CD8-positive, alpha-beta T cell (primary cell): ENCODE measurements at regions of chr6 and their contacts with region 1.

Region 1: DNA sequence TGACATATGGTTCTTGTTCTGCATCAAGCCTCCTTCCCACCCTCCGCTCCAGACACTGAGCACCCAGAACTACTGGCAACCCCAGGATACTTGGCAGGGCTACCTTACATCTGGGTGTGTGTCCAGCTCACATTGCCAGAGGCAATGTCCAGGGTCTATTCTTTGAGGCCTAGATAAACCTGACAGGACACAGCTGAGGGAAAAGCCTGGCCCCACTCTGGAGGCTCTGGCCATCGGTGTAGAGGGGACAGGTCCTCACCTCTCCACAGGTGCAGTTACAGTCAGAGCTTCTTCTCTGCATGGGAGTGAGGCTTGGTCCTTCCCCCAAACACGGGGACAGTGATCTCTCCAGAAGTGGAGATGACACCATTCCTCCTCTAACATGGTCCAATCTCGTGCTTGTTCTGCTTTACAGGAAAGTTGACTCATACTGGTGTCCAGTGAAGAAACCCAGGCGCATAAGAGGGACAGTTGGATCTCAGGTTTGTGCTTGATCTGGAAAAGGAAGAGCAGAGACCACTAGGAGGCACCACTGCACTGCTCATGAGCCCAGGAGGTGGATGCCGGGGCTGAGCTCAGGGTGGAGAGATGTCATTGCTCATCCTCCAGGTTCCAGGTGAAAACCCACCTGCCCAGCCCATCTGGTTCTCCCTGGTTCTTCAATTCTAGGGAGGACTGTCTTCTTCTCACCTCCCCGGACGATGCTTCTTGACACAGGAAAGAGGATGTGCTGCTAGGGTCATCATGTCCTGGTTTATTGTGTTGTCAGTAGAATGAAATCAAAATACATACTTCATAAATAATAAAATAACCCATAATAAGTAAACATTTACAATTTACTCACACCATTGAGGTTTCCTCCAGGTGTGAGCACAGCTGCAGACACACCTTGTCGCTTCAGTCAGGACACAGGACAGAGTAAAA is 14.7 kb downstream of the HLA-F start:
- DNase-seq: peak; percentile 45 to 87 (median 75)
- ATAC-seq: peak; percentile 89
- H3K4me3 ChIP-seq: no peak overlapping the region
- H3K4me3 Mint-ChIP-seq: no peak overlapping the region
- H3K27ac ChIP-seq: no peak overlapping the region
- H3K27ac Mint-ChIP-seq: no peak overlapping the region
- H3K4me1 ChIP-seq: no peaks in the 10 kb centered on the region
- H3K4me1 Mint-ChIP-seq: peaks cover 16% of the 10 kb centered on the region
- H3K27me3 ChIP-seq: no peaks in the 10 kb centered on the region
- H3K27me3 Mint-ChIP-seq: no peaks in the 10 kb centered on the region
- CTCF ChIP-seq: peak; percentile 67

Region 2: DNA sequence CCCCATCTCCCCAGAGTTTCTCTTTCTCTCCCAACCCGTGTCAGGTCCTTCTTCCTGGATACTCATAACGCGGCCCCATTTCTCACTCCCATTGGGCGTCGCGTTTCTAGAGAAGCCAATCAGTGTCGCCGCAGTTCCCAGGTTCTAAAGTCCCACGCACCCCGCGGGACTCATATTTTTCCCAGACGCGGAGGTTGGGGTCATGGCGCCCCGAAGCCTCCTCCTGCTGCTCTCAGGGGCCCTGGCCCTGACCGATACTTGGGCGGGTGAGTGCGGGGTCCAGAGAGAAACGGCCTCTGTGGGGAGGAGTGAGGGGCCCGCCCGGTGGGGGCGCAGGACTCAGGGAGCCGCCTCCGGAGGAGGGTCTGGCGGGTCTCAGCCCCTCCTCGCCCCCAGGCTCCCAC is 14.7 kb before region 1 on chr6 and contains the start of gene HLA-F:
- CTCF ChIA-PET with region 1: interaction called, 39 read pairs
- POLR2A ChIA-PET with region 1: interaction called, 8 read pairs
- intact Hi-C with region 1: no loop called
- DNase-seq: peak; percentile 69 to 98 (median 85)
- ATAC-seq: peak; percentile 77
- H3K4me3 ChIP-seq: peak within 1 kb of the TSS; percentile 98
- H3K4me3 Mint-ChIP-seq: peak within 1 kb of the TSS; percentile 93
- H3K27ac ChIP-seq: peak within 1 kb of the TSS; percentile 88 to 100
- H3K27ac Mint-ChIP-seq: peak within 1 kb of the TSS; percentile 97
- H3K4me1 ChIP-seq: peaks cover 48% of the 10 kb centered on the region
- H3K4me1 Mint-ChIP-seq: peaks cover 56% of the 10 kb centered on the region
- H3K27me3 ChIP-seq: no peaks in the 10 kb centered on the region
- H3K27me3 Mint-ChIP-seq: no peaks in the 10 kb centered on the region
- CTCF ChIP-seq: no peak
- total RNA-seq, gene HLA-F: 378 to 382 TPM

Region 3: DNA sequence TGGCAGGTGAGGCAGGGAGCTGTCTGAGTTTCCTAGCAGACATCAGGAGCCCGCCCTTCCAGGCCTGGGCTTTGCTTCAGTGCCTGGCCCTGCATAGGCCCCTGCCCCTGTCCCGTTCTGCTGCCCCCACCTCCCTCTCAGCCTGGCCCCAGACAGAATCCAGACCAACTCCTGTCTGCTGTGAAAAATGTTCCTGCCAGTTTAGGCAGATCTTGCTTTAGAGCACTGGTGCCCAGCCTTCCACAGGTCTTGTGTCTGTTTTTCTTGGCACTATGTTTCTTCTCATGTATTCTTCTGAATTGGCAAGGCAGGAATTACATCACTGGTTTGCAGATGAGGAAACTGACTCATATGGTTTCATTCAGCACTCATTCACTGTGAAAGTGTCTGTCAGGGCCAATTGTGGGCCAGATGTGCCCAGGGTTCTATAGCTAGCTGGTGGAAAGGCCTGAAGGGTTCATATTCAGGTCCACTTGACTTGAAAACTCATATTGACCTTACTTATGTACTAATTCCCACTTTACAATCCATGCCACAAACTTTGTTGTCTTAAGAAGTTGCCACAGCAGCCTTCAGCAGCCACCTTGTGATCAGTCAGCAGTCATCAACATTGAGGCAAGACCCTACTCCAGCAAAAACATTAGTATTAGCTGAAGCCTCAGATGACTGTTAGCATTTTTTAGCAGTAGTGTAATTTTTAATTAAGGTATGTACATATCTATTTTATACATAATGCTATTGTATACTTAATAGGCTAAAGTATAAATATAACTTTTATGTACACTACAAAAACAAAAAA is 25.7 kb after region 1 on chr6:
- CTCF ChIA-PET with region 1: interaction called, 15 read pairs
- POLR2A ChIA-PET with region 1: no interaction called
- intact Hi-C with region 1: no loop called
- DNase-seq: no peak
- ATAC-seq: no peak
- H3K4me3 ChIP-seq: no peak overlapping the region
- H3K4me3 Mint-ChIP-seq: no peak overlapping the region
- H3K27ac ChIP-seq: no peak overlapping the region
- H3K27ac Mint-ChIP-seq: no peak overlapping the region
- H3K4me1 ChIP-seq: no peaks in the 10 kb centered on the region
- H3K4me1 Mint-ChIP-seq: peaks cover 6% of the 10 kb centered on the region
- H3K27me3 ChIP-seq: no peaks in the 10 kb centered on the region
- H3K27me3 Mint-ChIP-seq: peaks cover 18% of the 10 kb centered on the region
- CTCF ChIP-seq: no peak

Region 4: GRCh38 chr6:29834564-29835436 is 96.8 kb after region 1 on chr6:
- CTCF ChIA-PET with region 1: interaction called, 90 read pairs
- POLR2A ChIA-PET with region 1: no interaction called
- intact Hi-C with region 1: loop called in 1 of 2 experiments (anchors 1 kb)
- DNase-seq: peak; percentile 26 to 77 (median 61)
- ATAC-seq: peak; percentile 57
- H3K4me3 ChIP-seq: no peak overlapping the region
- H3K4me3 Mint-ChIP-seq: no peak overlapping the region
- H3K27ac ChIP-seq: no peak overlapping the region
- H3K27ac Mint-ChIP-seq: no peak overlapping the region
- H3K4me1 ChIP-seq: no peaks in the 10 kb centered on the region
- H3K4me1 Mint-ChIP-seq: no peaks in the 10 kb centered on the region
- H3K27me3 ChIP-seq: peaks cover 0 to 8% of the 10 kb centered on the region in 2 experiments
- H3K27me3 Mint-ChIP-seq: peaks cover 68% of the 10 kb centered on the region
- CTCF ChIP-seq: peak; percentile 79

Region 5: GRCh38 chr6:30013291-30013922 is 275.4 kb after region 1 on chr6:
- CTCF ChIA-PET with region 1: interaction called, 4 read pairs
- POLR2A ChIA-PET with region 1: no interaction called
- intact Hi-C with region 1: loop called in 1 of 2 experiments (anchors 5 kb)
- DNase-seq: peak in 7 of 9 experiments; percentile 17 to 58 (median 52)
- ATAC-seq: no peak
- H3K4me3 ChIP-seq: no peak overlapping the region
- H3K4me3 Mint-ChIP-seq: no peak overlapping the region
- H3K27ac ChIP-seq: no peak overlapping the region
- H3K27ac Mint-ChIP-seq: no peak overlapping the region
- H3K4me1 ChIP-seq: no peaks in the 10 kb centered on the region
- H3K4me1 Mint-ChIP-seq: no peaks in the 10 kb centered on the region
- H3K27me3 ChIP-seq: peaks cover 0 to 2% of the 10 kb centered on the region in 2 experiments
- H3K27me3 Mint-ChIP-seq: no peaks in the 10 kb centered on the region
- CTCF ChIP-seq: no peak